Activated naive CD4-positive, alpha-beta T cell treated with anti-CD3 and anti-CD28 coated beads, Interleukin-2, amount 10 ng/mL, durations not matched to agents 7 days and 5 days (primary cell): ENCODE measurements at regions of chr9 and their contacts with region 1.

Region 1: GRCh38 chr9:36873247-36873875 is 160.7 kb downstream of the PAX5 start:
- DNase-seq: peak; percentile 82
- H3K4me3 Mint-ChIP-seq: no peak overlapping the region
- H3K27ac Mint-ChIP-seq: no peak overlapping the region
- H3K4me1 Mint-ChIP-seq: no peaks in the 10 kb centered on the region
- H3K27me3 Mint-ChIP-seq: peaks cover 28% of the 10 kb centered on the region

Region 2: DNA sequence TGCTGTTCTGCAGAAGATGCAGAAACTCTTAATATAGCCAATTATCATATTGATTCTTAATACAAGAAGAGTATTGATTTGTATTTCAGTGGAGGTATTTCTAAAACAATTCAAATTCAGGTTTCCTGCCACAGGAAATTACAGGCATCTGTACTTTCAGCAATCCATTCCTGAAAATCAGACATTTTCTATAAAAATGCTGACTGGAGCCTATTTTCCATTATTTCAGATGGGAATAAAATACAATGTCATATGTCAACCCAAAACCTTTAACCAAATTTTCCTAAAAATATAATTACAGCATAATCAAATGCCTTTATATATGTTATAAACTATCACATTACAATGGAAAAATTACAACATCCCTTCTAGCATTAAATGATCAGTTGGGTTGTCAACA is 169.2 kb before region 1 on chr9:
- CTCF ChIA-PET with region 1: no interaction called
- DNase-seq: no peak
- H3K4me3 Mint-ChIP-seq: no peak overlapping the region
- H3K27ac Mint-ChIP-seq: no peak overlapping the region
- H3K4me1 Mint-ChIP-seq: no peaks in the 10 kb centered on the region
- H3K27me3 Mint-ChIP-seq: peaks cover 4% of the 10 kb centered on the region

Region 3: DNA sequence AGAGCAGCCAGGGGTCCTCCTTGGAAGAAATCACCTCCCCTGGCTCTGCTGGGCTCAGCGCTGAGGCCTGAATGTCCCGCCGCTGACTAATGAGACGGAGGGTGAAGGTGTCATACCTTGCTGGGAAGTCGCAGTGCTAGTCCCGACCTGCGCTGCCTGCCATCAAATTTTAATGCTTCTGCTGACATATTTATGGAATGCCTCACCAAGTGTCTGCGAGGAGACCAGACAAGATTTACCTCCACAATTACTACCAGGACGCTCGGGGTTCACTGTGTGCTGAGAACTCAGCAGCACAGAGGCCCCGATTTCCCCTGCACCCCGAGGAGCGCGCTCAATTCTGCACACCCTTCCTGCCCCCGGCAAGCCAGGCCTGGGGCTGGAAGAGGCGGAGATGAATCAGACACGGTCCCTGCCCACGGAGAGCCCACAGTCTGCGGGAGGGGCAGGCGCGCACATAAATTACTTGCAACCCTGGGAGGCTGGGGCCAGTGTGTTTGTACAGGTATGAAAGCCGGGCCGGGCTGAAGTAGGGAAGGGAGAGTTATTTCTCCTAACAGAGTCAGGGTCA is 14.5 kb before region 1 on chr9:
- CTCF ChIA-PET with region 1: interaction called, 17 read pairs
- DNase-seq: no peak
- H3K4me3 Mint-ChIP-seq: no peak overlapping the region
- H3K27ac Mint-ChIP-seq: no peak overlapping the region
- H3K4me1 Mint-ChIP-seq: peaks cover 10% of the 10 kb centered on the region
- H3K27me3 Mint-ChIP-seq: peaks cover 23% of the 10 kb centered on the region

Region 4: GRCh38 chr9:36974731-36975130 is 101.4 kb after region 1 on chr9:
- CTCF ChIA-PET with region 1: interaction called, 40 read pairs
- DNase-seq: no peak
- H3K4me3 Mint-ChIP-seq: no peak overlapping the region
- H3K27ac Mint-ChIP-seq: no peak overlapping the region
- H3K4me1 Mint-ChIP-seq: no peaks in the 10 kb centered on the region
- H3K27me3 Mint-ChIP-seq: peaks cover 38% of the 10 kb centered on the region

Region 5: DNA sequence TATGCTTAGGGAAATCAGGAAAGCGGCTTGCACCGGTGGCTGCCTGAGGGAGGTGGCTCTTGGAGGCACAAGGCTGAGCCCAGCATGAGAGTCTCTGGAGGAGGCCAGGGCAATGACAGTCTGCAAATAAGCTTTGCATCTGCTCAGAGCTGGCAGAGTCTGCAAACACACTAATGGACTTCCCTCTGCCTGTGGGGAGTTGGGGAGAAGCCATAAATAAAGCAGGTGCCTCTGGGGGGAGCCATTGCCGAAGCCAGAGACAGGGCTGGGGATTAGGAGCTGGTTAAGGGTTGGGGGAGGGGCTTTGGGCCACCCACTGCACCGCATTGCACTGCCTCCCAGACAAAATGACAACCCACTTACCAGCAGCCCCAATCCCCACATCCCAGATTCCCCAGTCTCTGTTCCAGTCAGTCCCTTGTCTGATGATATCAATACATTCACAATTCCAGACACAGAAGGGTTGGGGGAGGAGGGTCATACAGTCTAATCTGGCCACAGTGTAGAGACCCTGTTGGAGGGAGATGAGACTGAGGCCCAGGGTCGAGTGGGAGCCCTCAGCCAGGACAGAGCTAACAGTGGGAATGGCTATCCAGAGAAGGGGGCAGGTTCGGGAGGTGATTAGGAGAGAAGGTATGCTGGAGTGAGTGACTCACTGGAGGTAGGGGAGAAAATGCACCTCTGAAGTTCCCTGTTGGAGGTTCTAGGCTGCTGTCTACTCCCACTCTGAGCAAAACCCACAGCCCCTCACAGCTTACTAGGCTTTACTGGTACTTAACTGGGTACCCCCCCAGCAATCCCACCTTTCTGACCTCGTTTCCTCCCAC is 107.0 kb after region 1 on chr9:
- CTCF ChIA-PET with region 1: interaction called, 175 read pairs
- DNase-seq: no peak
- H3K4me3 Mint-ChIP-seq: no peak overlapping the region
- H3K27ac Mint-ChIP-seq: no peak overlapping the region
- H3K4me1 Mint-ChIP-seq: peaks cover 4% of the 10 kb centered on the region
- H3K27me3 Mint-ChIP-seq: peaks cover 63% of the 10 kb centered on the region

Region 6: GRCh38 chr9:37046683-37047082 is 173.3 kb after region 1 on chr9:
- CTCF ChIA-PET with region 1: no interaction called
- DNase-seq: no peak
- H3K4me3 Mint-ChIP-seq: no peak overlapping the region
- H3K27ac Mint-ChIP-seq: no peak overlapping the region
- H3K4me1 Mint-ChIP-seq: no peaks in the 10 kb centered on the region
- H3K27me3 Mint-ChIP-seq: peaks cover 61% of the 10 kb centered on the region

Region 7: GRCh38 chr9:37390759-37391158 is 517.4 kb after region 1 on chr9:
- CTCF ChIA-PET with region 1: interaction called, 13 read pairs
- DNase-seq: peak; percentile 59
- H3K4me3 Mint-ChIP-seq: no peak overlapping the region
- H3K27ac Mint-ChIP-seq: no peak overlapping the region
- H3K4me1 Mint-ChIP-seq: no peaks in the 10 kb centered on the region
- H3K27me3 Mint-ChIP-seq: peaks cover 4% of the 10 kb centered on the region

Region 8: DNA sequence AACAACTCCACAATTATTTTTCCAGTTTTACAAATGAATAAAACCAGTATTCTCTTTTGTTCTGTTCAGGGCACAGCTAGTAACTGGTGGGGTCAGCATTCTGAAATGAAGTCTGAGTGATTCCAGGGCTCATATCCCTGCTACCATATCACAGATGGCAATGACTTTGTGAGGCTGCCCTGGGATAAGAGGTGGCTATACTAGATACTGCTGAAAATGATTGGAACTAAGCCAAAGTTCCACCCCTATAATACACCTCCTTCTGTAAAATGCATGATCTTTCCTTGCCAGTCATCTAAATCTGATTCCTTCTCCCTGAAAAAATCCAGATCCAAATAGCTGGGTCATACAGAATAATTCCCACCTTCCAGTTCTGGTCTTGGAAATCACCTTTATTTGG is 1016.2 kb after region 1 on chr9:
- CTCF ChIA-PET with region 1: no interaction called
- DNase-seq: no peak
- H3K4me3 Mint-ChIP-seq: no peak overlapping the region
- H3K27ac Mint-ChIP-seq: no peak overlapping the region
- H3K4me1 Mint-ChIP-seq: peaks cover 6% of the 10 kb centered on the region
- H3K27me3 Mint-ChIP-seq: no peaks in the 10 kb centered on the region